CD8-positive, alpha-beta T cell (primary cell): ENCODE measurements at regions of chr3 and their contacts with region 1.

Region 1: GRCh38 chr3:112948346-112948838 is 26.5 kb downstream of the CD200R1 start:
- DNase-seq: no peak
- ATAC-seq: no peak
- H3K4me3 ChIP-seq: no peak overlapping the region
- H3K4me3 Mint-ChIP-seq: no peak overlapping the region
- H3K27ac ChIP-seq: no peak overlapping the region
- H3K27ac Mint-ChIP-seq: peak overlapping the region; percentile 29
- H3K4me1 ChIP-seq: no peaks in the 10 kb centered on the region
- H3K4me1 Mint-ChIP-seq: peaks cover 18% of the 10 kb centered on the region
- H3K27me3 ChIP-seq: no peaks in the 10 kb centered on the region
- H3K27me3 Mint-ChIP-seq: no peaks in the 10 kb centered on the region
- CTCF ChIP-seq: no peak

Region 2: DNA sequence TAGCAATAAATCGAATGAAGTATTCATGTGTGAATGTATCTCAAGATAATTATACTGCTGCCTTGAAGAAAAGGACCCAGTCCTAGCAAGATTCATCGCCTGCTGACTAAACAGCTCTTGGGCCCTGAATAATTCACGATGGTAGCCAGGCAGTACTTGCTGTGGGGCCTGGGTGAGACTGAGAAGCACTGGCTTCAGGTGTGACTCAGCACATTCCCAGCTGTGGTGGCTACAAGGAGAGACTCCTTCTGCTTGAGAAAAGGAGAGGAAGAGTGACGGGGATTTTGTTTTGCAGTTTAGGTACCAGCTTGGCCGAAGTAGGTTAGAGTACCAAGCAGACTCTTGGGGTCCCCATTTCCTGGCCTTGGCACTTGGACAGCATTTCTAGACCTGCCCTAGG is 54.1 kb before region 1 on chr3:
- CTCF ChIA-PET with region 1: no interaction called
- POLR2A ChIA-PET with region 1: no interaction called
- intact Hi-C with region 1: no loop called
- DNase-seq: no peak
- ATAC-seq: no peak
- H3K4me3 ChIP-seq: no peak overlapping the region
- H3K4me3 Mint-ChIP-seq: no peak overlapping the region
- H3K27ac ChIP-seq: no peak overlapping the region
- H3K27ac Mint-ChIP-seq: no peak overlapping the region
- H3K4me1 ChIP-seq: no peaks in the 10 kb centered on the region
- H3K4me1 Mint-ChIP-seq: no peaks in the 10 kb centered on the region
- H3K27me3 ChIP-seq: no peaks in the 10 kb centered on the region
- H3K27me3 Mint-ChIP-seq: no peaks in the 10 kb centered on the region
- CTCF ChIP-seq: no peak

Region 3: DNA sequence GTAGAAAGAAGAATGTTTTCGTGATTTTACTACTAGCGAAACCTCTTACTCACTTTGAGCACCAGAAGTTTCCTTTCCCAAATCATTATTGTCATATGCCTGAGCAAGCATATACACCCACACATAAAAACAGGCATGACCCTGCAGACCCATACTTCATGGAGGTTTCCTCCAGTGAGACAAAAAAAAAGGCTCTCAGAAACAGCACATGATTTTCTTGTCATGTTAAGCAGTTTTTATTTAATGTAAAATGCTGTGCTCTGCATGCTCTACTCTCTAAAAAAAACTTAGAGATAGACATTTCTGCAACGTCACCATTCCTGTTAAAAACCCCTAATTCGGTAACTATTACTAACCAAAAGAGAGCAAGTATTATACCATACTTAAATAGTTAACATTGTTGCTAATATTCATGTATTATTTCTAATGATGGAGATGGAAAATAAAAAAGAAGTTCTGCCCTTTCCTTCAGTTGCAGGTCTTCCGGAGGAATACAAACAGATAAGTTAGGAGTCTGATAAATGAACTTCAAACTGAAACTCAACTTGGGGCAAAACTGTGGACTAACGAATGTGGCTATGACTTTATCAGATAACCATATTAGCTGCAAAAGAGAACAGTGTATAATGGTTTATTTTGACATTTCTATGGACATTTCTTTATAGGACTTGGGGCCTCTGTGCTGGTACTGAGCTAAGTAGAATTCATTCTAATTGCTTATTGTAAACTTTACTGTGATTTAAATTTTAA is 10.6 kb after region 1 on chr3:
- CTCF ChIA-PET with region 1: no interaction called
- POLR2A ChIA-PET with region 1: no interaction called
- intact Hi-C with region 1: loop called in 1 of 2 experiments (anchors 2 kb)
- DNase-seq: no peak
- ATAC-seq: no peak
- H3K4me3 ChIP-seq: no peak overlapping the region
- H3K4me3 Mint-ChIP-seq: peak overlapping the region; percentile 57
- H3K27ac ChIP-seq: no peak overlapping the region
- H3K27ac Mint-ChIP-seq: peak overlapping the region; percentile 45
- H3K4me1 ChIP-seq: peaks cover 6% of the 10 kb centered on the region
- H3K4me1 Mint-ChIP-seq: peaks cover 34% of the 10 kb centered on the region
- H3K27me3 ChIP-seq: no peaks in the 10 kb centered on the region
- H3K27me3 Mint-ChIP-seq: no peaks in the 10 kb centered on the region
- CTCF ChIP-seq: no peak

Region 4: GRCh38 chr3:112973325-112974177 is 25.2 kb after region 1 on chr3:
- CTCF ChIA-PET with region 1: no interaction called
- POLR2A ChIA-PET with region 1: interaction called, 4 read pairs
- intact Hi-C with region 1: loop called in 1 of 2 experiments (anchors 2 kb)
- DNase-seq: peak in 5 of 9 experiments; percentile 18 to 74 (median 35)
- ATAC-seq: peak; percentile 86
- H3K4me3 ChIP-seq: peak overlapping the region; percentile 45 to 61
- H3K4me3 Mint-ChIP-seq: peak overlapping the region; percentile 93
- H3K27ac ChIP-seq: peak overlapping the region; percentile 34 to 81
- H3K27ac Mint-ChIP-seq: peak overlapping the region; percentile 97
- H3K4me1 ChIP-seq: peaks cover 66% of the 10 kb centered on the region
- H3K4me1 Mint-ChIP-seq: peaks cover 82% of the 10 kb centered on the region
- H3K27me3 ChIP-seq: no peaks in the 10 kb centered on the region
- H3K27me3 Mint-ChIP-seq: no peaks in the 10 kb centered on the region
- CTCF ChIP-seq: no peak